ENCODE measurements at regions of chr10 and their contacts with region 1.

Region 1: DNA sequence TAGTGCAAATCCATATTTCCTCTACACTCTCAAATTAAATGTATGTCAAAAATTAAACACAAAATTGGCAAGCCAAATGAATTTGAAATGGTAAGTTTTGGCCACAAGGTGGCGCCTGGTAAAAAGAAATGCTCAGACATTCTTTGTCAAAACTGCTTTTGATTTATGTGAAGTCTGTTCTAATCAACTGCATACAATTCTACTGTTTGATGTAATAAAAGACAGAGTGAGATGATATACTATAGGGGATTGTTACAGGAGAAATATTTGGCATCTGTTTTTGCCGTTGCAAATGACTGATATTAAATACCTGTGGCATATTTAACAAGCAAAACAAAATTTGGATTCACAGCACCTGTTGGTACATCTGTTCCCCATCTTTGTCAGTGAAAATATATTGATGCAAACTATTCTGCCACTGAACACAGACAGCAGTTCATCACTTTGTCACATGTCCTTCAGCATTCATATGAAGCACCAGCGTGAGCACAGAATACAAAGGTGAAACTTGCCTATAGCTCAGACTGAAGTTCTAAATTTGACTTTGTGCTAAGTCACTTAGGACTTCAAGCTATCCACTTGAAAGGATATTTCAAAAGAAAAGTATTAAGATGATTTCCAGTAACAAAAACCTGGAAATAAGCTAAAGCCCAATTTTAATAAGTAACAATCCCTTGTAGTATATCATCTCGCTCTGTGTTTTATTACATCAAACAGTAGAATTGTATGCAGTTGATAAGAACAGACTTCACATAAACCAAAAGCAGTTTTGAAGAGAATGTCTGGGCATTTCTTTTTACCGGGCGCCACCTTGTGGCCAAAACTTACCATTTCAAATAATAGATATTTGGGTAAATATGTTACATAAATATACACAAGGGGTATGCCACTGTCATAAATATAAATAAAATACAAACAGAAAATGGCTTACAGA is 10.2 kb upstream of the CH25H start:
- DNase-seq: peak; percentile 73
- H3K4me3 Mint-ChIP-seq: no peak overlapping the region
- H3K27ac Mint-ChIP-seq: no peak overlapping the region
- H3K4me1 Mint-ChIP-seq: peaks cover 7% of the 10 kb centered on the region
- H3K27me3 Mint-ChIP-seq: no peaks in the 10 kb centered on the region
- CTCF ChIP-seq: peak; percentile 55

Region 2: GRCh38 chr10:89022734-89023133 is 194.6 kb before region 1 on chr10:
- CTCF ChIA-PET with region 1: interaction called, 22 read pairs
- POLR2A ChIA-PET with region 1: interaction called, 6 read pairs
- intact Hi-C with region 1: no loop called
- DNase-seq: no peak
- H3K4me3 Mint-ChIP-seq: no peak overlapping the region
- H3K27ac Mint-ChIP-seq: no peak overlapping the region
- H3K4me1 Mint-ChIP-seq: peaks cover 24% of the 10 kb centered on the region
- H3K27me3 Mint-ChIP-seq: no peaks in the 10 kb centered on the region
- CTCF ChIP-seq: no peak

Region 3: DNA sequence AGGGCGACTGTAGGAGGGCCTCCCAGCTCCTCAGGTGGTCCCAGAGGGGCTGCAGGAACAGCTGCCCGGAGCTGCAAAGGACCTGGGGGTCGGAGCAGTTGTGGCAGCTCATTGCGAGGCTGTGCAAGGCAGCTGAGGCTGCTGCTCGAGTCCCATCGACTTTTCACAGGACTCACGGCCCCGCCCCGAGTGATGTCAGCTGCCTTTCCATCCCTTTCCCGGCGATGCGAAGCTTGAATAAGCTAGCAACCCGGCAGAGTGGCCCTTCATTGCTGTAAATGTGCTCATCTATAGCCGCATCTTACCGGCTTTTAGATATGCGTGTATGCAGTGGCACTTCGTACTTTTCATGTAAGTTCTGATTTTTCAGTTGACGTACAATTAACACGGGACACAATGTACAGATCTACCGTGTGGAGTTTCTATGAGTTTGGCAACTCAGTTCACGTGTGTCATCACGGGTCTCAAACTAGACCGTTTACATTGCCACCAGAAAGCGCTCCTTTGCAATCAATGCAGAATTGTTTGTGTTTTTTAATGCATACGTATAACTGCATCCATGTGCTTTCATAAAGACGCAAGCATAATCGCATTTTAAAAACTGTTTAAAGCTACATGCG is 10.0 kb before region 1 on chr10 and contains the start of gene CH25H:
- CTCF ChIA-PET with region 1: interaction called, 17 read pairs
- POLR2A ChIA-PET with region 1: no interaction called
- intact Hi-C with region 1: no loop called
- DNase-seq: peak; percentile 69
- H3K4me3 Mint-ChIP-seq: peak within 1 kb of the TSS; percentile 62
- H3K27ac Mint-ChIP-seq: no peak within 1 kb of the TSS
- H3K4me1 Mint-ChIP-seq: peaks cover 6% of the 10 kb centered on the region
- H3K27me3 Mint-ChIP-seq: no peaks in the 10 kb centered on the region
- CTCF ChIP-seq: no peak
- total RNA-seq, gene CH25H: not detected in 2 replicates

Region 4: DNA sequence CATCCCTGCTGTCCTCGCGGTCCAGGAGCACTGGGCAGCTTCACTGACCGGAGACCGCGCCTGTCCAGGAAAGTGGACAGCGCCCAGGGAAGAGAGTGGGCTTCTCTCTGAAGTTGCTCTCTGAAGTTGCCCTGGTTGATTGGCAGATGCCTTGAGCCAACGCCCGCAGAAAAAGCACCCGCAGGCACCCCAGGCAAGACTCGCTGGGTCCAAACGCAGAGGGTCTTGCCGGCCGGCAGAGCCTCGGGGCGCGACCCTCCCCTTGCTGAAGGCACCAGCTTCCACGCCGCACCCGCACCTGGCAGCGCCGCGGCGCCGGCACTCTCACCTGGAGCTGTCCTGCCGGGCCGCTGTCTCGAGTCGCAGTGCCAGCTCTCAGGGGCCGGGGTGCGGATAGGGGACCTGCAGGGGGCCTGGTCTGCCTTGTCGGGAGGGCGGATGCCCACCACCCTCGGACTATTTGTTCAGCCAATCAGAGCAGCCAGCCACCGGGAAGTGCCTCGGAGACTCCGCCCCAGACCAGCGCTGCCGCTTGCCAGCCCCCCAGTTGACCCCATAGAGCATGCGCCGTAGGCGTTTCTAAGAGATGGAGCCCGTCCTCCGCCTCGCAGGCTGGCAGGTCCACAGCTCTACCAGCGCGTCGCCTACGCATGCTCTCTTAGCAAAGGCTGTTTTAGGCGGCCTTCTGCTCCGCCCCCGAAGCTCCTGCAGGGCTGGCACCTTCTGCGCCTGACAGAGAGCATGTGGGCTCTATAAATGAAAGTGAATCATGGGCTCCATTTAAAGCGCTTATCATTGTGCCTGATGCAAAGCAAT is 34.3 kb after region 1 on chr10 and contains the start of gene LIPA:
- CTCF ChIA-PET with region 1: interaction called, 11 read pairs
- POLR2A ChIA-PET with region 1: interaction called, 4 read pairs
- intact Hi-C with region 1: no loop called
- DNase-seq: peak; percentile 98
- H3K4me3 Mint-ChIP-seq: peak within 1 kb of the TSS; percentile 92
- H3K27ac Mint-ChIP-seq: peak within 1 kb of the TSS; percentile 52
- H3K4me1 Mint-ChIP-seq: peaks cover 16% of the 10 kb centered on the region
- H3K27me3 Mint-ChIP-seq: no peaks in the 10 kb centered on the region
- CTCF ChIP-seq: no peak
- total RNA-seq, gene LIPA: 18.5 and 22.3 TPM in 2 replicates

Region 5: GRCh38 chr10:89563861-89564478 is 346.6 kb after region 1 on chr10:
- CTCF ChIA-PET with region 1: interaction called, 5 read pairs
- POLR2A ChIA-PET with region 1: no interaction called
- intact Hi-C with region 1: loop called (anchors 2 kb)
- DNase-seq: peak; percentile 62
- H3K4me3 Mint-ChIP-seq: no peak overlapping the region
- H3K27ac Mint-ChIP-seq: peak overlapping the region; percentile 17
- H3K4me1 Mint-ChIP-seq: peaks cover 6% of the 10 kb centered on the region
- H3K27me3 Mint-ChIP-seq: no peaks in the 10 kb centered on the region
- CTCF ChIP-seq: peak; percentile 71